ENCODE measurements at regions of chr7 and their contacts with region 1.

Region 1: DNA sequence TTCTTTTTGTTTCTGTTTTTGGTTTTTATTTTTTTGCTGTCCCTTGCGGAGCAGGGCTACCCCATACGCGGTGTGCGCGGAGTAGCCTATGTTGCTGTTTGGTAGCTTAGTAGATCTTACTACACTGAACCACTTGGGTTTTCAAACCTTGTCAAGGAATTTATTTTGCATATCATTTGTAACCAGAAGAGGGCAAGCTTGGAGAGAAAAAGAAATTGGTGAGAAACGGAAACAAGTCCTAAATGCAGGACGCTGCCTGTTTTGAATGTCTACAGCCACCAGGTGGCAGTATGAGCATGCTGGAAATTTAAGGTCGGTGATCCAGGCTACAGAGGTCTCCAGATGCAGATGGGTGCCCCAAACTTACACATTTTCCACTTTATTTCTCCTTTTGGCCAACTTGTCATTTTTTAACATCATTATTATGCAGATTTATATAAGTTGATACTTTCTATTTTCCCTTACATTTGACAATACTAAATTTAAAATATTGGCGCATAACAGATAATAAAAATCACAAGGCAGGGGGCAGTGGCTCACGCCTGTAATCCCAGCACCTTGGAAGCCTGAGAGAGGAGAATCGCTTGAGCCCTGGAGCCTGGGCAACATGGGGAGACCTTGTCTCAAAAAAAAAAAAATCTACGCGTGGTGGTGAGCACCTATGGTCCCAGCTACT is 15.3 kb upstream of the TRA2A start:
- DNase-seq: peak; percentile 81
- CTCF ChIP-seq: peak; percentile 84

Region 2: GRCh38 chr7:22814261-22815208 is 732.5 kb before region 1 on chr7:
- in situ Hi-C with region 1: no loop called
- DNase-seq: no peak
- CTCF ChIP-seq: no peak

Region 3: GRCh38 chr7:23273141-23273599 is 273.9 kb before region 1 on chr7:
- in situ Hi-C with region 1: loop called (anchors 10 kb)
- DNase-seq: peak; percentile 82
- CTCF ChIP-seq: peak; percentile 90

Region 4: DNA sequence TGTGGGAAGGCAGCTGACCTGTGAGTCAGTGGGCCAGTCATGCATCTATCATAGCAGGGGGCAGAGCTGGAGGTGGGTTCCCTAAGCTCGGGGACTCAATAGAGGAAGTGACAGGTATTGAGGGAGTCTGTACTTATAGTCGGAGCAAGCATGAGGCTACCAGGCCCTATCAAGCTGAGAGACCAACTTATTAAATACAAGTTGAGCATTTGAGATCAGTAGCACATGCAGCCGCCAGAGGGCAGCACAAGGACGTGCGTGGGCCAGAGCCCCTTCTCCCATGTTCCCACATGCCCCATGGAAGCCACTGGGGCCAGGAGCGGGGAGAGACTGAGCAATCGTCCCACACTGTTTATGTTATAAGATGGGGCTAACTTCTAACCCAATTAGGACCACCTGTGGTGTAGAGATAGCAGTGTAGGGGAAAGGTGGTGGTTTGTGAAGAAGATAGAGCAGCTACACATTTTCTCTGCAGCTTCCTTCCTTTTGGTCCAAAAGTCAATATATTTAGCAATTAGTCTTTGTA is 149.9 kb after region 1 on chr7:
- in situ Hi-C with region 1: no loop called
- DNase-seq: peak; percentile 64
- CTCF ChIP-seq: peak; percentile 75

Measured in GM13976 (cell line).